PC-3 (cell line): ENCODE measurements at regions of chr3 and their contacts with region 1.

Region 1: GRCh38 chr3:41961750-41962679 is at the start of gene ULK4:
- DNase-seq: peak; percentile 99
- ATAC-seq: peak; percentile 90
- H3K4me3 ChIP-seq: peak within 1 kb of the TSS; percentile 87
- H3K27ac ChIP-seq: peak within 1 kb of the TSS; percentile 15
- H3K4me1 ChIP-seq: peaks cover 6% of the 10 kb centered on the region; the same call in 1 of the 2 replicates
- H3K27me3 ChIP-seq: no peaks in the 10 kb centered on the region
- CTCF ChIP-seq: no peak
- total RNA-seq, gene ULK4: 4.8 and 10.0 TPM in 2 replicates

Region 2: DNA sequence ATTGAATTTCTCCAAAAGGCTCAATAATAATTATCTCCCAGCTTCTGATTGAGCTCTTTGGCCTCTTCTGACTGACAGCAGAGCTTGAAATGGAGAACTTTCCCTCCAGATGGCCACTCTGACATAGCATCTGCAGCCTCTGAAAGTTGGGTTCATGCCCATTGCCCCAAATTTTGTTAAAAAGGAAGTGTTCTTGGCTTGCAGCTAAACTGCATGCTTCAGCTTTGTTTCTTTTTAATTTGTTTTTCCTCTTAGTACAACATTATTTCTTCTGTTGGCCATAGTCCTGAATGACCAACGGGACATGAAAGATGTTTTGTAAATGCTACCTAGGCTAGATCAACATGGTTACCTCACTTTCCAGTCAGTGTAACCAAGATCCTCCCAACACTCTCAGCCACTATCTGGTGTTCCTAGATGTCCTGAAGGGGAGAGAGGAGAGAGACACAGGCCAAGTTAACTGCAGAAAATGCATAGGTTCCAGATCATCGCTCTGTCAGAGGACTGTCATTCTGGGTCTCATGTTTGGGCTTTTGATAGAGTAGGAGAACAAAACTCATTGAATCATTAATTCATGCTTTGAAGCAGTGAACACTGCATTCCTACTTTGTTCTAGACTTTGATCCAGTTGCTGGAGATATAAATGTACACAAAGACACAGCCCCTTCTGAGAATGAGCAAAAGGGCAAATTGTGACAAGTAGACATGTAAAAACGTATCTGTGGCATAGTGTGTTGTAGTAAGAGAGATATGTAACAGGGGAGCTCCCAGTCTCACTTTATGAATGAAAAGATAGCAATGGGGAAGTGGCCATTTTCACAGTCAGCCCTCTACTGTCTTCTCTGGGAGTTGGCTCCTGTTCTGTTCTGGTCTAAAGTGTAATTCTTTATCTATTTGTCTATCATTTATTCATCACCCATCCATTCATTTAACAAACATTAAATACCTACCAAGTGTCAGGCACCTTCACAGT is 1281.0 kb before region 1 on chr3:
- CTCF ChIA-PET with region 1: no interaction called
- POLR2A ChIA-PET with region 1: no interaction called
- intact Hi-C with region 1: no loop called
- DNase-seq: no peak
- ATAC-seq: no peak
- H3K4me3 ChIP-seq: no peak overlapping the region
- H3K27ac ChIP-seq: no peak overlapping the region
- H3K4me1 ChIP-seq: no peaks in the 10 kb centered on the region
- H3K27me3 ChIP-seq: peaks cover 51% of the 10 kb centered on the region; the same call in 1 of the 2 replicates
- CTCF ChIP-seq: no peak

Region 3: GRCh38 chr3:41295740-41296139 is 666.3 kb before region 1 on chr3:
- CTCF ChIA-PET with region 1: no interaction called
- POLR2A ChIA-PET with region 1: no interaction called
- intact Hi-C with region 1: no loop called
- DNase-seq: no peak
- ATAC-seq: no peak
- H3K4me3 ChIP-seq: no peak overlapping the region
- H3K27ac ChIP-seq: no peak overlapping the region
- H3K4me1 ChIP-seq: no peaks in the 10 kb centered on the region
- H3K27me3 ChIP-seq: no peaks in the 10 kb centered on the region
- CTCF ChIP-seq: no peak

Region 4: GRCh38 chr3:41991399-41991798 is 29.4 kb after region 1 on chr3:
- CTCF ChIA-PET with region 1: no interaction called
- POLR2A ChIA-PET with region 1: no interaction called
- intact Hi-C with region 1: loop called (anchors 2 kb)
- DNase-seq: peak; percentile 67
- ATAC-seq: peak; percentile 63
- H3K4me3 ChIP-seq: no peak overlapping the region
- H3K27ac ChIP-seq: no peak overlapping the region
- H3K4me1 ChIP-seq: peaks cover 16% of the 10 kb centered on the region
- H3K27me3 ChIP-seq: no peaks in the 10 kb centered on the region
- CTCF ChIP-seq: no peak

Region 5: GRCh38 chr3:42012935-42013690 is 51.1 kb after region 1 on chr3:
- CTCF ChIA-PET with region 1: no interaction called
- POLR2A ChIA-PET with region 1: interaction called, 3 read pairs
- intact Hi-C with region 1: loop called (anchors 2 kb)
- DNase-seq: peak; percentile 55
- ATAC-seq: peak; percentile 83
- H3K4me3 ChIP-seq: peak overlapping the region; percentile 77
- H3K27ac ChIP-seq: no peak overlapping the region
- H3K4me1 ChIP-seq: peaks cover 15% of the 10 kb centered on the region
- H3K27me3 ChIP-seq: no peaks in the 10 kb centered on the region
- CTCF ChIP-seq: no peak

Region 6: GRCh38 chr3:42024591-42025351 is 62.8 kb after region 1 on chr3:
- CTCF ChIA-PET with region 1: no interaction called
- POLR2A ChIA-PET with region 1: no interaction called
- intact Hi-C with region 1: no loop called
- DNase-seq: no peak
- ATAC-seq: no peak
- H3K4me3 ChIP-seq: no peak overlapping the region
- H3K27ac ChIP-seq: no peak overlapping the region
- H3K4me1 ChIP-seq: peaks cover 36% of the 10 kb centered on the region
- H3K27me3 ChIP-seq: no peaks in the 10 kb centered on the region
- CTCF ChIP-seq: no peak

Region 7: GRCh38 chr3:42071904-42072592 is 110.0 kb after region 1 on chr3:
- CTCF ChIA-PET with region 1: no interaction called
- POLR2A ChIA-PET with region 1: no interaction called
- intact Hi-C with region 1: loop called (anchors 1 kb)
- DNase-seq: peak; percentile 97
- ATAC-seq: peak; percentile 94
- H3K4me3 ChIP-seq: peak overlapping the region; percentile 46
- H3K27ac ChIP-seq: peak overlapping the region; percentile 74
- H3K4me1 ChIP-seq: peaks cover 29% of the 10 kb centered on the region
- H3K27me3 ChIP-seq: no peaks in the 10 kb centered on the region
- CTCF ChIP-seq: 0 out of 2 replicates have a peak, but pooled peaks have one; percentile 16